PC-3 (cell line): ENCODE measurements at regions of chr2 and their contacts with region 1.

Region 1: GRCh38 chr2:208072250-208072892 is 47.0 kb upstream of the PLEKHM3 start:
- DNase-seq: peak; percentile 77
- ATAC-seq: peak; percentile 85
- H3K4me3 ChIP-seq: no peak overlapping the region
- H3K27ac ChIP-seq: no peak overlapping the region
- H3K4me1 ChIP-seq: no peaks in the 10 kb centered on the region
- H3K27me3 ChIP-seq: peaks cover 16% of the 10 kb centered on the region; the same call in 1 of the 2 replicates
- CTCF ChIP-seq: peak; percentile 88

Region 2: DNA sequence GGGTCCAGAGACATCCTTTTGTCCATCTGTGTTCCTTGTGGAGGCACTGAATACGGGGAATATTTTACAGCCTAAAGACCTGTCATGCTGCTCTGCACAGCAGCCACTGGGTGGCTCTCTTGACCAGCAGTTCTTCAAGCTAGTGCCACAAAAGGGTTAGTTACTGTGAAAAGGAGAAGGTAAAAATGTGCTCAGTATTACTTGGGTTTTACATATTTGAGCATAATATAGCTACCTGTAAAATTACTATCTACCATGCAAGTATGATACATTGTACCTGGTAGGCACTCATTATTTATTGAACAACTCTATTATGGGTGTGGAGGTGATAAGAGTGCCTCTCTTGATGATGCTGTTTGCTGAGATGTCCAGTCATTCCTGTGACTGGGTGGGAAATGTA is 326.2 kb before region 1 on chr2:
- CTCF ChIA-PET with region 1: no interaction called
- POLR2A ChIA-PET with region 1: no interaction called
- intact Hi-C with region 1: loop called (anchors 1 kb)
- DNase-seq: peak; percentile 75
- ATAC-seq: peak; percentile 93
- H3K4me3 ChIP-seq: no peak overlapping the region
- H3K27ac ChIP-seq: no peak overlapping the region
- H3K4me1 ChIP-seq: no peaks in the 10 kb centered on the region
- H3K27me3 ChIP-seq: no peaks in the 10 kb centered on the region
- CTCF ChIP-seq: peak; percentile 98

Region 3: DNA sequence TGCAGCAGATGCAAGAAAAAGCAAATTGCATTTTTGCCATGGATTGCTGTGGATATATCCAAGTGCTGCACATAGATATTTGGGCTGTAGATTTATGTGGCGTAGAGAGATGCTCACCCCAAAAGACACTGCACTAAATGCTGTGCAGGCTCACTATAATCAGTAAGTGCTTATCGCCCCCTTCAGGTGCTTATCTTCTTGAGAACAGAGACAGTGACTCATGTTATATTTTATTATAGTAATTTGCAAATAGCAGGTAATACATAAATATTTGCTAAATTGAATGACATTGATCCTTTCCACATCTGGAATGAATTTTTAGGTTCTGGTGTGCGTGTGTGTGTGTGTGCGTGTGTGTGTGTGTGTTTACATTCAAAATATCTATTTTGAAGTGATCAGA is 10.3 kb before region 1 on chr2:
- CTCF ChIA-PET with region 1: interaction called, 10 read pairs
- POLR2A ChIA-PET with region 1: no interaction called
- intact Hi-C with region 1: no loop called
- DNase-seq: peak; percentile 61
- ATAC-seq: peak; percentile 40; the same call in 1 of the 2 replicates
- H3K4me3 ChIP-seq: no peak overlapping the region
- H3K27ac ChIP-seq: no peak overlapping the region
- H3K4me1 ChIP-seq: peaks cover 8% of the 10 kb centered on the region; the same call in 1 of the 2 replicates
- H3K27me3 ChIP-seq: no peaks in the 10 kb centered on the region
- CTCF ChIP-seq: peak; percentile 71